GM10248 (cell line): ENCODE measurements at regions of chr6 and their contacts with region 1.

Region 1: GRCh38 chr6:9482030-9482738 is 932.7 kb downstream of the TFAP2A start:
- DNase-seq: no peak
- CTCF ChIP-seq: no peak

Region 2: DNA sequence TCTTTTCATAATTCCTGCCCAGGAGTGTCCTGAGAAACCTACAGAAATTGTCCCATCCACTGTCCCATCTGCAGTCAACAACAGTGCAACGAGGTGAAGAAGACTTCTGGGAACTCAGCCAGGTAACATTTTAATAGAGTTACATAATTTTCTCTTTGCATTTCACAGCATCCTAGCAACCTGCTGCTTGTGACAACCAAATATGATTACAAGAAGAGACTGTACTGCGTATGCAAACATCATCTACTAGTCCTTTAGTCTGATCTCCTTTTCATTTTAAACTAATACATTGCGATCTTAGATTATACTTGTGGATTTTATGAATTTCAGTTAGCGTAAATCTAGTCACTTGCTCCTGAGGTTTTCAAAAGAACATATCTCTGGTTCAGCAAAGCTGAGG is 18.8 kb before region 1 on chr6:
- CTCF ChIA-PET with region 1: interaction called, 11 read pairs
- POLR2A ChIA-PET with region 1: no interaction called
- DNase-seq: no peak
- CTCF ChIP-seq: no peak

Region 3: DNA sequence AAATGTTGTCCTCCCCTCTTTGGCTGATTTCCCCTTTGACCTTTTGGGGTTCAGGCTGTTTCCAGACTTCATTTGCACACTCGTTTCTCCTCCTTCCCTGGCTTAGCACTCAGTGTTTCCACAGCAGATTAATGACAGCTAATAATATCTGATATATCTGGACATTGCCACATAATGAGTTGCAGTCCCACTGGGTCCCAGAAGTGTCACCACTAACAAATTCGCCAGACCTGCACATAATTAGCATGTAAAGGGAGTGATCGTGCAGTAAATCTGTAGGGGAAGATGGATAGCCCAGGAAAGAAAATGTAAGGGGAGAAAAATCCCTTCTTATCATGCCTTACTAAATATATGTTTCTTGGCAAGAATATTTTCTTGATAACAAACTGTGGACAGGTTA is 10.6 kb after region 1 on chr6:
- CTCF ChIA-PET with region 1: interaction called, 14 read pairs
- POLR2A ChIA-PET with region 1: no interaction called
- DNase-seq: no peak
- CTCF ChIP-seq: no peak

Region 4: GRCh38 chr6:9532571-9533557 is 50.7 kb after region 1 on chr6:
- CTCF ChIA-PET with region 1: no interaction called
- POLR2A ChIA-PET with region 1: no interaction called
- DNase-seq: no peak
- CTCF ChIP-seq: no peak